ENCODE measurements at regions of chr15 and their contacts with region 1.

Region 1: DNA sequence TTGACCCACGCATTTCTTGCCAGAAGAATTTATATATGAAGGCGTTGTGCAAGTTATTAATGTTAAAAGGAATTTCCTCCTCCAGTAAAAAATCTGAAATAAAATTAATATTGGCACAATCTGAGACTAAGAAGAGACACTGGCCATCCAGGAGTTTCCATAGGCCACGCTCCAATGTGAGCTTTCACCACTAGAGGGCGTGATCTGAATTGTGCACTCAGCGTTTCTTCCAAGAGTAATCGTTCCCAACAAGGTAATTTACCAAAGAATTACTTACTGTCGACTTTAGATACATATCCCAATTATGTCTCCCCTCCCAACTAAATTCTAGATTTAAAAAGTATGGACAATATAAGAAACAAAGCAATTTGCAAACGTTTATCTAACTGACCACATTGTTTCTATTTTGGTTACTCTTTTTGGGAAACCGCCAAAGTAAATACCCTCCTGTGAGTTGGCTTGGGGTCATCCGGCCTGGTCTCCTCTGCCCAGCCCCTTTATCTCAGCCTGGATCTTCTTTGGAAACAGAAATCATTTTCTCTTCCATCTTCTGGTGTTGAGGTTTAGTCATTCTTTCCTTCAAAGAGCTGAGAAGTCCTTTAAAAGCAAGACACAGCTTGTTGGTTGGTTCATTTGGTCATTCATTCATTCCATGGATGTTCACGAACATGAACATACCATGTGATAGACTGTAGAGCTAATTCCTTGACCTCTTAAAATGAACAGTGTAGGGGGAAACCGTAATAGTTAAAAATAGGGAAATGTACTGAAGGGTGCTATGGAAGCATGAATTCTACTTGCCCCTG is 26.2 kb downstream of the POLR2M start:
- DNase-seq: peak; percentile 52
- H3K4me3 Mint-ChIP-seq: no peak overlapping the region
- H3K27ac Mint-ChIP-seq: no peak overlapping the region
- H3K4me1 Mint-ChIP-seq: peaks cover 8% of the 10 kb centered on the region
- H3K27me3 Mint-ChIP-seq: no peaks in the 10 kb centered on the region

Region 2: DNA sequence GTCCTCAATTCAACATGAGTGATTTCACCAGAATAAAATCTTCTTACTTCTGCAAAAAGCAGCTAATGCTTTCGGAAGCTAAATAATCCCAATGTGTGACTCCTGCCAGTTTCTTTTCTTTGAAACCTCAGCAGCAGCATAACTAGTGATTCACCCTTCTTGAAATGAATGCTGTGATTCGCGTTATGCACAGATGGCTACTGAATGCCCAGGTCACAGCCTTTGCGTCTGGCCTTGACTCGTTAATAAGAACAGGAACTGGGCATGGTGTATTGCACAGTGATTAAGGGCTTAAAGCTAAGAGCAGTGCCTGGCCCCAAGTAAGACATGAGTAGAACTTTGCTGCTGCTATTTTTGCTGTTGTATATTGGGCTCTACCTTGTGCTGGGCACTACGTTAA is 337.4 kb before region 1 on chr15:
- CTCF ChIA-PET with region 1: no interaction called
- POLR2A ChIA-PET with region 1: no interaction called
- intact Hi-C with region 1: no loop called
- DNase-seq: no peak
- H3K4me3 Mint-ChIP-seq: no peak overlapping the region
- H3K27ac Mint-ChIP-seq: no peak overlapping the region
- H3K4me1 Mint-ChIP-seq: no peaks in the 10 kb centered on the region
- H3K27me3 Mint-ChIP-seq: peaks cover 2% of the 10 kb centered on the region

Region 3: GRCh38 chr15:57720867-57721266 is 11.9 kb before region 1 on chr15:
- CTCF ChIA-PET with region 1: interaction called, 10 read pairs
- POLR2A ChIA-PET with region 1: interaction called, 3 read pairs
- intact Hi-C with region 1: no loop called
- DNase-seq: no peak
- H3K4me3 Mint-ChIP-seq: no peak overlapping the region
- H3K27ac Mint-ChIP-seq: no peak overlapping the region
- H3K4me1 Mint-ChIP-seq: peaks cover 2% of the 10 kb centered on the region
- H3K27me3 Mint-ChIP-seq: no peaks in the 10 kb centered on the region

Region 4: GRCh38 chr15:57743424-57743823 is 10.7 kb after region 1 on chr15:
- CTCF ChIA-PET with region 1: interaction called, 20 read pairs
- POLR2A ChIA-PET with region 1: no interaction called
- intact Hi-C with region 1: no loop called
- DNase-seq: no peak
- H3K4me3 Mint-ChIP-seq: no peak overlapping the region
- H3K27ac Mint-ChIP-seq: no peak overlapping the region
- H3K4me1 Mint-ChIP-seq: no peaks in the 10 kb centered on the region
- H3K27me3 Mint-ChIP-seq: no peaks in the 10 kb centered on the region

Region 5: DNA sequence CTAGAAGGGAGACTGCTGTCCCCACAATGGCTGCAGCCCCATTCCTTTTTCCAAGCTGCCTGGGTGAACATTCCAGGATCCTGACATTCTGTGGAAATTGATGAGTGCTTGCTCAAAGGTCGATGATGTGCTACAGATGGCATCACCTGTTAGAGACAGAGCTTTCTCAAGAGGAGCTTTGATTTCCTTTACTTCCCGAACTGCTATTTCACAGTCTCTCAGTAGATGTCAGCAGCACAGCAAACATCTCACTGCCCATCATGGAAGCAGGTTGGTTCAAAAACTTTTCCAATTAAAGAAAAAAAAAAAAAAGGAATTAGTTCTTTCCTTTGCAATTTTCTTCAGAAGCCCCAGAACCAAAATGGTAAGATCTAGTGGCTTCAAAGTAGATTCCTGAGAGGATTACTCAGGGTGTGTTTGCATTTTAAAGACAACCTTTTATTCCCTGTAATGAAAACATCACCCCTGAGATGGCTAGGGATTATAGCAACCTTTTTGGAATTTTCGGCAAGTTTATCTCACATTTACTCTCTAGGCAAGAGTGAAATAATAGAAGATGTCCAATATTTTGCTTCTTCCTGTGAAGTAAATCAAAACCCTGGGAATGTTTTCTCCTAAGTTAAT is 18.6 kb after region 1 on chr15:
- CTCF ChIA-PET with region 1: interaction called, 20 read pairs
- POLR2A ChIA-PET with region 1: no interaction called
- intact Hi-C with region 1: no loop called
- DNase-seq: no peak
- H3K4me3 Mint-ChIP-seq: no peak overlapping the region
- H3K27ac Mint-ChIP-seq: no peak overlapping the region
- H3K4me1 Mint-ChIP-seq: no peaks in the 10 kb centered on the region
- H3K27me3 Mint-ChIP-seq: no peaks in the 10 kb centered on the region

Region 6: GRCh38 chr15:57911247-57911646 is 178.5 kb after region 1 on chr15:
- CTCF ChIA-PET with region 1: no interaction called
- POLR2A ChIA-PET with region 1: no interaction called
- intact Hi-C with region 1: no loop called
- DNase-seq: no peak
- H3K4me3 Mint-ChIP-seq: no peak overlapping the region
- H3K27ac Mint-ChIP-seq: no peak overlapping the region
- H3K4me1 Mint-ChIP-seq: no peaks in the 10 kb centered on the region
- H3K27me3 Mint-ChIP-seq: peaks cover 5% of the 10 kb centered on the region